ENCODE measurements at regions of chr11 and their contacts with region 1.

Region 1: DNA sequence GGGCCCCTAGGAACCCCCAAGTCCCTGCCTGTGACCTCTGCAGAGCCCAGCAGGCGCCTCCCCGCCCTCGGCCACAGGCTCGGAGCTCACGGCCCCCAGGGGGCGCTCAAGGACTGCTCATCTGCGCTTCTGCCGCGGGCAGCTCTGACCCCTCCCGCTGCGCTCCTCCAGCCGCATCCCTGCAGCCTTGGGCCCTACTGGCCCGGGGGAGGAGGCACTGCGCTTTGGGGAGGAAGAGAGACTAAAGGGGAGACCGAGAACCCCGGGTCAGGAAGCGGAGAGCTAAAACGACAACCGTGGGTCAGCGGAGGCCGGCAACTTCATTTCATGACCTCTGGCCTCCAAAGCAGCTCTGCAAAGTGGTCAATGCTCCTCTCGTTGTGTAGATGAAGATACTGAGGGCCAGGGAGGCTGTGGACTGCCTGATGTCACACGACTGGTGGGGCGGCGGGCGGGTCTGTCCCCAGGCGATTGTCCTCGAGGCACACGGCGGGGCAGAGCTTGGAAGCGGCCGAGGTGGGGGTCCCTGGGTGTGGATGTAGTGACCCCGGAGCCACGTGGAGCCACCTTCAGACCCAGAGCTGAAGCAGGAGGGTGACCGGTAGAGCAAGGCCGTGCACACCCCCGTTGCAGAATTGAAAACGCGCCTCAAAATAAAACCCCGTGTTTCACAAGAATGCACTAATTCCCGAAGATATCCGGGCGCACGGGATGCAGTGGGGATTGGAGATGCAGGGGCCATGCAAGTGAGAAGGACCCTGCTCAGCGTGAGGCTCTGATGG is 2.7 kb upstream of the KRTAP5-6 start:
- DNase-seq: peak; percentile 94

Region 2: GRCh38 chr11:1652771-1653540 is 41.3 kb before region 1 on chr11:
- intact Hi-C with region 1: loop called (anchors 2 kb)
- DNase-seq: peak; percentile 88